Sciatic nerve (tissue), 2 donors: ENCODE measurements at regions of chr9 and their contacts with region 1.

Region 1: DNA sequence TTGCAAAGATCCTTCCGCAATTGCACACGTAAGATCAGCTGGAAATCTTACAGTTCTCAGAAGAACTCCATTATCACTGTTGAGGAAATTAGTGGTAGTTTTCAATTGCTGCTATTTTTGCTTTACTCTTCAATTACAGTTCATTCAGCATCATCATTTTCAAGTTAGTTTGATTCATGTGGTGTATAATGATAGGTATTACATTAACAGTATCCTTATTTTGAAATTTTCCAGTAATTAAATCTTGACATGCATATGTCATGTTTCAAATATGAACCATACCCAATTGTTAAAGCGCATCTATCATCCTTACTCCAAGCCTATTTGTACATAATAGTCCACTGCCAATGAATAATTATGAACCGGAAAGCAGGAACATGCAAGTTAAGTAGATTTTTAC is 60.3 kb downstream of the NR6A1 start:
- DNase-seq: no peak
- ATAC-seq: no peak

Region 2: DNA sequence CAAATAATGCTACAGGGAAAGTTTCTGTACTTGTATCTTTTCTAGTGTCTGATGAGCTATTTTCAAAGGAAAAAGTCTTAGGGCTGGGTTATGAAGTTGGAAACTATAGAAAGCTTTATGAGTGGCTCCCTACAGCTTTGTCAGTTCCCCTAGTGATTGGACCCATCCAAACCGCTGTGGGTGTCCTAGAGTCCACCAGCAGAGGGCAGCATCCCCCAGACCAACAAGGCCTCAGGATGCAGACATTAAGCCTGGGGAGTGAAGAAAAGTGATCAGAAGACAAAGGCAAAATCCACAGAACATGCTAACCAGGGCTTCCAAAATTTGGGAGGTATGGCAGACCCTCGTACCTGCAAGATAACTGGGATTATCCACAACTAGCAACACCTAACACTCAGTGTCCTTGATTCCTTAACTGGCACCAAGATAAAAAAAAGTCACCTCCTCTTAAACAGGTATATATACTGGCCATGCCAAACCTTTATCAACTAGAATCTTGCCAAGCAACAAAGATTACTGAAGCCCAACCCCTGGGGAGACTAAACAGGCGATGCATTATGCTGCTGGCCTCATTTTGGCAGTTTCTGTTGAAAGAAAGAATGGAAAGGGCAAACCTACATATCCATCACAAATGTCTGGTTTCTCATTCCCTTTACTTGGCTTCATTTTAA is 93.2 kb before region 1 on chr9:
- intact Hi-C with region 1: loop called (anchors 5 kb)
- DNase-seq: peak; percentile 89
- ATAC-seq: peak; percentile 91